Activated naive CD4-positive, alpha-beta T cell treated with anti-CD3 and anti-CD28 coated beads, Interleukin-2, amount 10 ng/mL, durations not matched to agents 7 days and 5 days (primary cell): ENCODE measurements at regions of chr7 and their contacts with region 1.

Region 1: DNA sequence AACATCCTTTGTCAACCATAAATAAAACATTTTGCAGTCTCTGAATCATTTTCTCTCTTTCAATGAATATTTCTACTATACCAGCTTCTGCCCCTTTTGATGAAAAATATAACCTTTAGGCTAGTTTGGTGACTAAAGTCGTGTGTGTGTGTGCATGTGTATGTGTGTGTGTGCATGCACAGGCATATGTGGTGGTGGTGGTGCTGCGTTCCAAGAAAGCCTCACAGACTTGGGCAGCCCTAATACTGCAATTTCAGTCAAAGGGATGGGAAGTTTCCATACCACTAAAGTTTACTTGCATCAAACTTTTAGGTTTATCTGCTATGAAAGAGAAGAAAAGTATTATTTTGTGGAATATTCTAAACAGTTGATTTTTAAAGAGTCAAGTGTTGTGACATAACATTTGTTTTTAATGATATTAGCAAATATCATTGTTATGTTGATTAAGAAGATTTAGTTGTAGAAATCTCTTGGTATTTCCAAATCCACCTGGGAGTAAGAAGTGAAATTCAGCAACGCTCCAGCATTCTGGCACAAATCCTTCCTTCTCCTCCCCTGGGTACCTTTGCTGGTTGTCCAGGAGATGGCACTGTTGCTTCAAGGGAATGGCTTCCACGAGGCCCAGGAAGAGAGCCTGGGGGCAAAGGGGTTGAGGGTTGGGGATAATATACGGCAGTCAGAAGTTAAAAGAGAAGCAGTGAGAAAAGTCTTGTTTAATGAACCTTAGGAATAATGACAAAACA is 41.5 kb downstream of the ASB4 start:
- DNase-seq: peak; percentile 31
- H3K4me3 Mint-ChIP-seq: no peak overlapping the region
- H3K27ac Mint-ChIP-seq: no peak overlapping the region
- H3K4me1 Mint-ChIP-seq: no peaks in the 10 kb centered on the region
- H3K27me3 Mint-ChIP-seq: peaks cover 7% of the 10 kb centered on the region

Region 2: DNA sequence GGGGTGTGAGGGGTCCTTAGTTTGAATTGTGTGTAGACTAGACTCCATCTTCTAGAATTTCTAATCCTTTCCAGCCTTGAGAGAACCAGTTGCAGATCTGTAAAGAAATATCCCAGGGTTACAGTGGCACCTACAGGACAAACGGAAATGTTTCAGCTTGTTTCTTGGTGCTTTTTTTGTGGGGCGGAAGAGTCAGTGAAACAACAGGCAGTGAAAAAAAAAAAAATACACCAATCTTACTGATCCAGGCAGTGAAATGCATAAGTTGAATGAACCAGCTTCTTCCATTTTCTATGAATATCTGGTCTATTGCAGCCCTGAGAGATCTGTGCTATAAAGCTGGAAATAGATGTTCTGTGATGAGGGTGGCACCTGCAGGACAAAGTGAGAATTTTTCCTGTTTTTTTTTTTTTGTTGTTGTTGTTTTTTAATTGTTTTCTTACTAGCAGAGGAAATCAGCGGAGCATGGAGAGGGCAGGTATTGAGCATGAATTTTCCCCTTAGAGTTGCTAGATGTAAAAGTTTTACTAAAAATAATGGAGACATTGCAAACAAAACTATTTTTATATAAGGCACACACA is 163.3 kb after region 1 on chr7:
- CTCF ChIA-PET with region 1: interaction called, 89 read pairs
- DNase-seq: no peak
- H3K4me3 Mint-ChIP-seq: no peak overlapping the region
- H3K27ac Mint-ChIP-seq: no peak overlapping the region
- H3K4me1 Mint-ChIP-seq: no peaks in the 10 kb centered on the region
- H3K27me3 Mint-ChIP-seq: peaks cover 4% of the 10 kb centered on the region

Region 3: DNA sequence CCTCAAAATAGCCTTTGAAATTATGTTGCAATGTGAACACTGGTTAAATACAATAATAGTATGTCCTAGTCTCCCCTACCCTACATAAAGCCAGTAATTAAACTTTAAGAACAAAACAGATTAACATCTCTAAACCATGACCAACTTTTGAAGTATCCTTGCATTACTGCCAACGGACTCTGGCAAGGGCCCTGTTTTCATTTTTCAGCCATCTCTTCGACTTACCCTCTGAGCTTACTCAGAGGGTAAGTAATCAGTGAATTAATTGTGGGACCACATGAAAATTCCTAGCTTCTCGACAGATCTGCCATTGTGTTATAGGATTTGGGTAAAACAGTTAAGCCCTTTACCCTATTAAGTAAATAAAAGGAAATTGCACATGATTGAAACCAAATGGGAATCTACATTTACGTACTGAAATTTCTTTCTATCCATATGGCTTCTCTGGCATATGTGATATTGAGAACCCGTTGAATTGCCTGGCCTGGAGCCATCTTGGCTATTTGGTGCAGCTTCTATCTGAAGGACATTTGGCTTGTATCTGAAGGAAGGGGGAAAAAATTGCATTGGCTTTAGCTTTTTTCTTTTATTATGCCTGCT is 284.7 kb after region 1 on chr7:
- CTCF ChIA-PET with region 1: no interaction called
- DNase-seq: no peak
- H3K4me3 Mint-ChIP-seq: no peak overlapping the region
- H3K27ac Mint-ChIP-seq: no peak overlapping the region
- H3K4me1 Mint-ChIP-seq: no peaks in the 10 kb centered on the region
- H3K27me3 Mint-ChIP-seq: no peaks in the 10 kb centered on the region